ENCODE measurements at regions of chrX and their contacts with region 1.

Region 1: GRCh38 chrX:1521459-1521956 is 15.5 kb downstream of the P2RY8 start:
- DNase-seq: peak; percentile 66
- ATAC-seq: peak; percentile 85
- H3K4me3 Mint-ChIP-seq: peak overlapping the region; percentile 83
- H3K27ac Mint-ChIP-seq: peak overlapping the region; percentile 97
- H3K4me1 Mint-ChIP-seq: peaks cover 64% of the 10 kb centered on the region
- H3K27me3 Mint-ChIP-seq: no peaks in the 10 kb centered on the region
- CTCF ChIP-seq: no peak

Region 2: DNA sequence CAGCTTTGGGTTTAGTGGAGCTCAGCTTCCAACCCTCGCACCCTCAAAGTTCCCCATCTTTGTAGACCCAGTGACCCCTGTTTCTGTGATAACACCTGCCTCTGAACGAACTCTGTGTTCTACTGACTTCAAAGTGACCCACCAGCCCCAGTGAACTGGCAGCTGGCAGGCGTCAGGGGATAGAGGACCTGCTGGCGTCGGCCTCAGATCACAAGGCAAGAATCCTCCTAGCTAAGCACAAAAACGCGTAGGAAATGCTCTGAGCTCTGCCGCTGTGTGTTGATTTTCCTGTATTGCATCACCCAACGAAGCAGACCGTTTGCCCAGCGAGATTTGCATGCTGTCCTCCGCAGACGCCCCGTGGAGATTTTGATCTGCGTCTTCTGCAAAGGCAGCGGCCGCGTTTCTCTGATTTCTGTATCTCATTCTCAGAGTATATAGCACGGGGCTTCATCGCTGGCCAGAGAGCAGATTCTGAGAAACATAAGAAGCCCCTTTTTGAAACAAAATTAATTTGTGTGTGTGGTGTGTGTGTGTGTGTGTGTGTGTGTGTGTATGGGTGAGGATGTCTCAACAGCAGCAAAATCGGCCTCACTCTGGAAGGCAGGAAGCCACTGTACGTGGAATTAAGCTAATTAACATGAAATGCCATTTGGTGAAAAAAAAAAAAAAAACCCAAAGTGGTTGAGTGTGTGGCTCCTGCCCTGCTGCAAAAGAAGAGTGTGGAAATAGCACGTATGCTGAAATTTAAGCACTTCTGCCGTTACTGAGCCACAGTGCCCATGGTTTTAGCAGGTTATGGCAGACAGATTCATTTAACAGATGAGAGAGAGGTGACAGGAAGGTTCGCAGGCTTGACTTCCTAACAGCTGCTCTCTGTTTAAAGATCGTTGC is 39.6 kb before region 1 on chrX:
- CTCF ChIA-PET with region 1: no interaction called
- POLR2A ChIA-PET with region 1: no interaction called
- intact Hi-C with region 1: loop called (anchors 1 kb)
- DNase-seq: peak; percentile 63
- ATAC-seq: peak; percentile 53
- H3K4me3 Mint-ChIP-seq: peak overlapping the region; percentile 81
- H3K27ac Mint-ChIP-seq: peak overlapping the region; percentile 97
- H3K4me1 Mint-ChIP-seq: peaks cover 90% of the 10 kb centered on the region
- H3K27me3 Mint-ChIP-seq: no peaks in the 10 kb centered on the region
- CTCF ChIP-seq: no peak

Region 3: DNA sequence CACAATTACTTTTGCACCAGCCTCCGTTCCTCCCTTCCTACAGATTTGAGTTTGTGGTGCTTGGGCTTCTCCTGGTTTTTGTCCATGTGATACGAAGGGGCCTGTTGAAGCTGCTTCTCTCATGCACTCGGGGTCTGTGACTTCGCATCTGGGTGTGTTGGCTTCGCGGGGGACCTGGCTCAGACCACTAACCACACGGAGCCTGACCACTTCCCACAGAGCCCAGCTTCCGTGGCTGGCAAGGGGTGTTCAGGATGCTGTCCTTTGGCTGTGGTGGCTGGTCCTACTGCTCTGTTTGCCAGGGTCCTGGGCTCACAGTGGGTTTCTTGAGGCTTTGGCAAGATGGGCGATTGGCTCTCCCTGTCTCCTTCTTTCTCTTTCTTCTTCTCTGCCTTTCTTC is 1210.6 kb after region 1 on chrX:
- CTCF ChIA-PET with region 1: no interaction called
- POLR2A ChIA-PET with region 1: no interaction called
- intact Hi-C with region 1: no loop called
- DNase-seq: no peak
- ATAC-seq: no peak
- H3K4me3 Mint-ChIP-seq: no peak overlapping the region
- H3K27ac Mint-ChIP-seq: no peak overlapping the region
- H3K4me1 Mint-ChIP-seq: no peaks in the 10 kb centered on the region
- H3K27me3 Mint-ChIP-seq: no peaks in the 10 kb centered on the region
- CTCF ChIP-seq: no peak